GM12878 (cell line): ENCODE measurements at regions of chr12 and their contacts with region 1.

Region 1: GRCh38 chr12:57583008-57583831 is 7.8 kb upstream of the PIP4K2C start:
- DNase-seq: peak; percentile 31
- ATAC-seq: peak; percentile 100
- H3K4me3 ChIP-seq: no peak overlapping the region
- H3K27ac ChIP-seq: no peak overlapping the region
- H3K4me1 ChIP-seq: no peaks in the 10 kb centered on the region
- H3K27me3 ChIP-seq: no peaks in the 10 kb centered on the region; a peak in 1 of 4 replicates
- CTCF ChIP-seq: peak; percentile 91 to 98 (median 97)
- EP300 ChIP-seq: no peak
- POLR2A ChIP-seq: no peak
- RAD21 ChIP-seq: peak; percentile 89

Region 2: GRCh38 chr12:57558864-57559263 is 24.4 kb before region 1 on chr12:
- CTCF ChIA-PET with region 1: interaction called, 19 read pairs
- POLR2A ChIA-PET with region 1: no interaction called
- RAD21 ChIA-PET with region 1: no interaction called
- SMC1A ChIA-PET with region 1: no interaction called
- in situ Hi-C with region 1: no loop called
- intact Hi-C with region 1: no loop called
- DNase-seq: no peak
- ATAC-seq: no peak
- H3K4me3 ChIP-seq: no peak overlapping the region
- H3K27ac ChIP-seq: no peak overlapping the region
- H3K4me1 ChIP-seq: no peaks in the 10 kb centered on the region
- H3K27me3 ChIP-seq: 0 out of 4 replicates have a peak, but pooled peaks cover 0 to 1% of the 10 kb centered on the region in 2 experiments
- CTCF ChIP-seq: no peak
- EP300 ChIP-seq: no peak
- POLR2A ChIP-seq: no peak
- RAD21 ChIP-seq: no peak

Region 3: GRCh38 chr12:57621497-57622292 is 38.5 kb after region 1 on chr12:
- CTCF ChIA-PET with region 1: interaction called, 119 read pairs
- POLR2A ChIA-PET with region 1: interaction called, 3 read pairs
- RAD21 ChIA-PET with region 1: interaction called, 28 read pairs
- SMC1A ChIA-PET with region 1: interaction called, 16 read pairs
- in situ Hi-C with region 1: no loop called
- intact Hi-C with region 1: loop called (anchors 1 kb)
- DNase-seq: no peak
- ATAC-seq: peak; percentile 92
- H3K4me3 ChIP-seq: 0 out of 2 replicates have a peak overlapping the region, but pooled peaks have one; percentile 16
- H3K27ac ChIP-seq: no peak overlapping the region
- H3K4me1 ChIP-seq: peaks cover 6% of the 10 kb centered on the region
- H3K27me3 ChIP-seq: peaks cover 28 to 31% of the 10 kb centered on the region in 2 experiments; a peak in 3 of 4 replicates
- CTCF ChIP-seq: peak; percentile 80 to 90 (median 80)
- EP300 ChIP-seq: no peak
- POLR2A ChIP-seq: no peak
- RAD21 ChIP-seq: peak; percentile 58

Region 4: GRCh38 chr12:57632694-57633477 is 49.7 kb after region 1 on chr12 and contains the start of gene B4GALNT1:
- CTCF ChIA-PET with region 1: interaction called, 38 read pairs
- POLR2A ChIA-PET with region 1: no interaction called
- RAD21 ChIA-PET with region 1: interaction called, 3 read pairs
- SMC1A ChIA-PET with region 1: interaction called, 15 read pairs
- in situ Hi-C with region 1: no loop called
- intact Hi-C with region 1: loop called (anchors 1 kb)
- DNase-seq: no peak
- ATAC-seq: peak; percentile 95
- H3K4me3 ChIP-seq: peak within 1 kb of the TSS; percentile 49; the same call in 1 of the 2 replicates
- H3K27ac ChIP-seq: no peak within 1 kb of the TSS
- H3K4me1 ChIP-seq: no peaks in the 10 kb centered on the region
- H3K27me3 ChIP-seq: peaks cover 17% of the 10 kb centered on the region in 2 experiments
- CTCF ChIP-seq: peak; percentile 77 to 93 (median 86)
- EP300 ChIP-seq: no peak
- POLR2A ChIP-seq: no peak
- RAD21 ChIP-seq: peak; percentile 53
- polyA plus RNA-seq, gene B4GALNT1: not detected

Region 5: GRCh38 chr12:57700317-57700716 is 117.1 kb after region 1 on chr12:
- CTCF ChIA-PET with region 1: no interaction called
- POLR2A ChIA-PET with region 1: no interaction called
- RAD21 ChIA-PET with region 1: no interaction called
- SMC1A ChIA-PET with region 1: no interaction called
- in situ Hi-C with region 1: no loop called
- intact Hi-C with region 1: no loop called
- DNase-seq: no peak
- ATAC-seq: no peak
- H3K4me3 ChIP-seq: no peak overlapping the region
- H3K27ac ChIP-seq: no peak overlapping the region
- H3K4me1 ChIP-seq: no peaks in the 10 kb centered on the region
- H3K27me3 ChIP-seq: no peaks in the 10 kb centered on the region
- CTCF ChIP-seq: no peak
- EP300 ChIP-seq: no peak
- POLR2A ChIP-seq: no peak
- RAD21 ChIP-seq: no peak

Region 6: GRCh38 chr12:57904848-57905811 is 321.9 kb after region 1 on chr12:
- CTCF ChIA-PET with region 1: interaction called, 3 read pairs
- POLR2A ChIA-PET with region 1: no interaction called
- RAD21 ChIA-PET with region 1: no interaction called
- SMC1A ChIA-PET with region 1: interaction called, 6 read pairs
- in situ Hi-C with region 1: no loop called
- intact Hi-C with region 1: loop called (anchors 10 kb)
- DNase-seq: peak; percentile 46
- ATAC-seq: peak; percentile 97
- H3K4me3 ChIP-seq: no peak overlapping the region
- H3K27ac ChIP-seq: no peak overlapping the region
- H3K4me1 ChIP-seq: peaks cover 4% of the 10 kb centered on the region
- H3K27me3 ChIP-seq: peaks cover 0 to 2% of the 10 kb centered on the region in 2 experiments; a peak in 2 of 4 replicates
- CTCF ChIP-seq: peak; percentile 100; a peak in 5 of 6 replicates
- EP300 ChIP-seq: no peak
- POLR2A ChIP-seq: no peak
- RAD21 ChIP-seq: peak; percentile 99